OCI-LY7 (cell line): ENCODE measurements at regions of chr14 and their contacts with region 1.

Region 1: DNA sequence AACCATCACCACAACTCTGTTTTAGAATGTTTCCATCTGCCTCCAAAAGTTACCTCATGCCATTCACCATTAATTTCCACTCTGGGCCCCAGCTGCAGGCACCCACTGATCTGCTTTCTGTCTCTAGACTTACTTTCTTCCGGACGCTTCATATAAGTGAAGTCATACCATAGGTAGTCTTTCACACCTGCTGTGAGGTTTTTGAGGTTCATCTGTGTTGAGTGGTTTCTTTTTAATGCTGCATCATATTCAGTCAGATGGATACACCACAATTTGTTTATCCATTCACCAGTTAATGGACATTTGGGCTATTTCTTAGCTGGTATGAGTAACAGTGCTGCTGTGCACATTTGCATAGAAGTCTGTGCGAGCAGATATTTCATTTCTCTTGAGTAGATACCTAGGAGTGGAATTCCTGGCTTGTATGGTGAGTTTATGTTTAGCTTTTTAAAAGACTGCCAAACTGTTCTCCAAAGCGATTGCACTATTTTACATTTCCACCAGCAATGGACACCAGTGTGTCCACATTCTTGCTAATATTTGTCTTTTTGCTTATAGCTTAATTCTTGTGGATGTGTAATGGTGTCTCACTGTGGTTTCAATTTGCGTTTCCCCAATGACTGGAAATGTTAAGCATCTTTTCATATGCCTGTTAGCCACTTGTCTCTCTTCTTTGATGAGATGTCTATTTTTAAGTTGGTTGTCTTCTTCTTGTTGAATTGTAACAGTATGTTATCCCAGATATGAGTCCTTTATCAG is 48.3 kb downstream of the ZFYVE21 start:
- DNase-seq: no peak
- H3K4me3 ChIP-seq: no peak overlapping the region
- H3K27ac ChIP-seq: no peak overlapping the region
- H3K4me1 ChIP-seq: peaks cover 8% of the 10 kb centered on the region
- CTCF ChIP-seq: no peak

Region 2: DNA sequence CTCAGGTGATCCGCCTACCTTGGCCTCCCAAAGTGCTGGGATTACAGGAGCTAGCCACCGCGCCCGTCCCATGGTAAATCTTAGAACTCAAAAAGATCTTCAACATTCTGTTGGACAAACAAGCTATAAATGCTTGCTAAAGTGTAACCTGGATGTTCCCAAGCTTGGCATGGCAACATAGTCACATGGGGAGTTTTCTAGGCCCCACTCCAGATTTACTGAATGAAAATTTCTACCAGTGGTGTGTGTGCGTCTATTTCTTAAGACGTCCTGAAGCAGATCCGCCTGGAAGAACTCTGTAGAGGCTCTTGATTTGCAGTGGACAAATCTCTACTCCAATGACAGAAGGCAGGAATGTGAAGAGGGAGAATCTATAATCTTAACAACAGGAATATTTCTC is 11.6 kb after region 1 on chr14:
- CTCF ChIA-PET with region 1: no interaction called
- POLR2A ChIA-PET with region 1: interaction called, 10 read pairs
- intact Hi-C with region 1: no loop called
- DNase-seq: no peak
- H3K4me3 ChIP-seq: no peak overlapping the region
- H3K27ac ChIP-seq: no peak overlapping the region
- H3K4me1 ChIP-seq: no peaks in the 10 kb centered on the region
- CTCF ChIP-seq: no peak